ENCODE measurements at regions of chr17 and their contacts with region 1.

Region 1: DNA sequence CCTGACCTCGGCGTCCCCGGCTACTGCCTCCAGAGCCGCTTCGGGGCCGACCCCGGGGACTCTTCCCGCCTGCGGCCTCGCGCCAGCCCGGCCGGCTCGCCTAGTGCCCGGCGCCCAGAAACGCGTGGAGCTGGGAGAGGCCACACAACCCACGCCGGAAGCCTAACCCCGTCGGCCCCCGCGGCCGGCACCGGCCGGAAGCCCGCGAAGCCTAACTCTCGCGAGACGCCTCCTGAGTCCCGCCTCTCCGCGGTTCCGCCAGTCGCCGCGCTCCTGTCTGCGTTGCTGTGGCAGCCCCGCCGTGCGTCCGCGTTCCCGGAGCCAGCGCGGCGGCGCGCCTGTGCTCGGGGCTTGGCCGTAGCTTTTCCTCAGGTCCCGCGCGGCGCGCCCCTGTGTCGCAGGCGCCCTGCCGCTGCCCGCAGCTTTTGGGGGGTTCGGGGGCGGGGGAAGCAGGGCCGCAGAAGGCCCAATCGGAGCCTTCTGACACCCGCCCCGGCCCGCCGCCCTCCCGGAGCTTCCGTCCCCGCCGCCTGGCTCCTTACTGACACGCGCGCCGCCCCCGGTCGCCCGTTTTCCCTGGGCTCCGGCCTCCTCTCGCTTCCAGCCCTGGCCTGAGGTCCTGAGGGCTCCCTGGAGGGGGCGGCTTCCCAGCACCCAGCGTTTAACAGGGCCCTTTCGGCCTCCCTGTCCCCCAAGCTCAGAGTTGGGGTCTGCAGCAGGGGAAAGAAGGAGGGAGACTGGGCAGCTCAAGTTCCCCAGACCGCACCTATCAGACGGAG is 21.7 kb downstream of the NPTX1 start:
- DNase-seq: peak; percentile 91 to 97 (median 95)
- ATAC-seq: peak; percentile 95
- H3K4me3 ChIP-seq: peak overlapping the region; percentile 83
- H3K4me3 Mint-ChIP-seq: peak overlapping the region; percentile 86 to 98 (median 92)
- H3K27ac ChIP-seq: peak overlapping the region; percentile 100
- H3K27ac Mint-ChIP-seq: peak overlapping the region; percentile 94 to 99 (median 95)
- H3K4me1 ChIP-seq: peaks cover 11 to 14% of the 10 kb centered on the region in 2 donors
- H3K4me1 Mint-ChIP-seq: peaks cover 0 to 35% (median 15%) of the 10 kb centered on the region in 7 donors
- H3K27me3 ChIP-seq: peaks cover 0 to 3% of the 10 kb centered on the region in 2 donors
- H3K27me3 Mint-ChIP-seq: peaks cover 0 to 22% (median 20%) of the 10 kb centered on the region in 5 donors

Region 2: GRCh38 chr17:80384088-80384960 is 70.4 kb before region 1 on chr17:
- CTCF ChIA-PET with region 1: no interaction called
- POLR2A ChIA-PET with region 1: no interaction called
- intact Hi-C with region 1: no loop called
- DNase-seq: no peak
- ATAC-seq: no peak
- H3K4me3 ChIP-seq: no peak overlapping the region
- H3K4me3 Mint-ChIP-seq: peak overlapping the region in 2 of 10 donors; percentile 48 to 63
- H3K27ac ChIP-seq: no peak overlapping the region
- H3K27ac Mint-ChIP-seq: peak overlapping the region in 8 of 9 donors; percentile 14 to 81 (median 61)
- H3K4me1 ChIP-seq: no peaks in the 10 kb centered on the region
- H3K4me1 Mint-ChIP-seq: peaks cover 0 to 16% (median 0%) of the 10 kb centered on the region in 7 donors
- H3K27me3 ChIP-seq: no peaks in the 10 kb centered on the region
- H3K27me3 Mint-ChIP-seq: no peaks in the 10 kb centered on the region

Region 3: GRCh38 chr17:80414803-80415625 is 39.7 kb before region 1 on chr17 and contains the start of gene ENDOV:
- CTCF ChIA-PET with region 1: no interaction called
- POLR2A ChIA-PET with region 1: interaction called, 8 read pairs
- intact Hi-C with region 1: loop called (anchors 1 kb)
- DNase-seq: peak; percentile 87 to 97 (median 92)
- ATAC-seq: peak; percentile 94
- H3K4me3 ChIP-seq: peak within 1 kb of the TSS; percentile 74
- H3K4me3 Mint-ChIP-seq: peak within 1 kb of the TSS; percentile 78 to 92 (median 88)
- H3K27ac ChIP-seq: peak within 1 kb of the TSS; percentile 83
- H3K27ac Mint-ChIP-seq: peak within 1 kb of the TSS; percentile 47 to 94 (median 77)
- H3K4me1 ChIP-seq: peaks cover 4 to 16% of the 10 kb centered on the region in 2 donors
- H3K4me1 Mint-ChIP-seq: peaks cover 12 to 40% (median 32%) of the 10 kb centered on the region in 7 donors
- H3K27me3 ChIP-seq: peaks cover 0 to 4% of the 10 kb centered on the region in 2 donors
- H3K27me3 Mint-ChIP-seq: peaks cover 5 to 32% (median 15%) of the 10 kb centered on the region in 5 donors
- total RNA-seq, gene ENDOV: 20.3 to 26.5 (median 21.7) TPM

Region 4: GRCh38 chr17:80477647-80478478 is 23.1 kb after region 1 on chr17:
- CTCF ChIA-PET with region 1: no interaction called
- POLR2A ChIA-PET with region 1: interaction called, 5 read pairs
- intact Hi-C with region 1: loop called in 1 of 2 experiments (anchors 2 kb)
- DNase-seq: peak in 6 of 9 donors; percentile 29 to 58 (median 42)
- ATAC-seq: peak; percentile 31
- H3K4me3 ChIP-seq: no peak overlapping the region
- H3K4me3 Mint-ChIP-seq: peak overlapping the region in 1 of 10 donors; percentile 76
- H3K27ac ChIP-seq: no peak overlapping the region
- H3K27ac Mint-ChIP-seq: no peak overlapping the region
- H3K4me1 ChIP-seq: peaks cover 8 to 15% of the 10 kb centered on the region in 2 donors
- H3K4me1 Mint-ChIP-seq: peaks cover 8 to 24% (median 21%) of the 10 kb centered on the region in 7 donors
- H3K27me3 ChIP-seq: peaks cover 0 to 20% of the 10 kb centered on the region in 2 donors
- H3K27me3 Mint-ChIP-seq: peaks cover 46 to 58% (median 53%) of the 10 kb centered on the region in 5 donors

Region 5: GRCh38 chr17:80544655-80545498 is 90.1 kb after region 1 on chr17 and contains the start of gene RPTOR:
- CTCF ChIA-PET with region 1: no interaction called
- POLR2A ChIA-PET with region 1: interaction called, 11 read pairs
- intact Hi-C with region 1: loop called in 1 of 2 experiments (anchors 2 kb)
- DNase-seq: peak; percentile 71 to 91 (median 86)
- ATAC-seq: peak; percentile 100
- H3K4me3 ChIP-seq: peak within 1 kb of the TSS; percentile 97
- H3K4me3 Mint-ChIP-seq: peak within 1 kb of the TSS; percentile 88 to 97 (median 94)
- H3K27ac ChIP-seq: peak within 1 kb of the TSS; percentile 79
- H3K27ac Mint-ChIP-seq: peak within 1 kb of the TSS; percentile 85 to 97 (median 93)
- H3K4me1 ChIP-seq: peaks cover 13 to 15% of the 10 kb centered on the region in 2 donors
- H3K4me1 Mint-ChIP-seq: peaks cover 17 to 39% (median 32%) of the 10 kb centered on the region in 7 donors
- H3K27me3 ChIP-seq: no peaks in the 10 kb centered on the region
- H3K27me3 Mint-ChIP-seq: peaks cover 0 to 4% (median 3%) of the 10 kb centered on the region in 5 donors
- total RNA-seq, gene RPTOR: 53.7 to 89.8 (median 69.5) TPM

Region 6: GRCh38 chr17:80704381-80704819 is 249.7 kb after region 1 on chr17:
- CTCF ChIA-PET with region 1: no interaction called
- POLR2A ChIA-PET with region 1: interaction called, 6 read pairs
- intact Hi-C with region 1: loop called in 1 of 2 experiments (anchors 10 kb)
- DNase-seq: no peak
- ATAC-seq: no peak
- H3K4me3 ChIP-seq: no peak overlapping the region
- H3K4me3 Mint-ChIP-seq: peak overlapping the region in 7 of 10 donors; percentile 42 to 76 (median 51)
- H3K27ac ChIP-seq: no peak overlapping the region
- H3K27ac Mint-ChIP-seq: peak overlapping the region in 7 of 9 donors; percentile 34 to 96 (median 88)
- H3K4me1 ChIP-seq: peaks cover 33 to 35% of the 10 kb centered on the region in 2 donors
- H3K4me1 Mint-ChIP-seq: peaks cover 46 to 91% (median 83%) of the 10 kb centered on the region in 7 donors
- H3K27me3 ChIP-seq: no peaks in the 10 kb centered on the region
- H3K27me3 Mint-ChIP-seq: no peaks in the 10 kb centered on the region

Region 7: DNA sequence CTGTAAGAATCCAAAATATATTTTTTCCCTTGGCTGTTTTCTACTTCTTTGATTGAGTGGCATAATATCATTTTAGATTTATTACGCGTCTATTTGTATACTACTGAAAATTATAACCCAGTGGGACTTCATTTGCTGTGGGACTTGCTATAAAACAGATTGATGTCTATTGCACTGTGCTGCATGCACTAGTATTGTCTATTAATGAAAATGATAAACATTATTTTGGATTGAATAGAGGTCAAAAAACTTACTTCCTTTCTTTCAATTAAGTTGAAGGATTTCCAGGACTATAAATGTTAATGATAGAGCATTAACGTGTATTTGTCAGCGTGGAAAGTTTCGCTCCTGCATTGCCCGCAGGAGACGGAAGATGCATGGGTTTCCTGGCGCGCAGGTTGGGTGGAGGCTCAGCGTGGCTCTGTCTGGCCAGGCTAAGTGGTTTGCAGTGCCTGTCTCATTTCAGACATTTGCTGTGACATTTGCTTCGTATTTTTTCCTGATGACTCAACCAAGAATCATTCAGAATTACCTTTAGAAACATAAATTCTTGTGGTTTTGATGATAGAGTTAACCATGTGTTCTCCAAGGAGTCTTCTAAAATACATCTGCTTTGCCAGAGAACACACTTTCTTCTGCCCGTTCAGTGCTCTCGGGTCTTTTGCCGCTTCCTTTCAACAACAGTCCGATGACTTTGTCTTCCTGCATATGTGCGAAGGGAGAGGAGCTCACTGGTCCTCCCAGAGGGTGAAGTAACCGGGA is 306.5 kb after region 1 on chr17:
- CTCF ChIA-PET with region 1: no interaction called
- POLR2A ChIA-PET with region 1: interaction called, 4 read pairs
- intact Hi-C with region 1: loop called in 1 of 2 experiments (anchors 10 kb)
- DNase-seq: peak in 5 of 9 donors; percentile 34 to 73 (median 41)
- ATAC-seq: peak; percentile 45
- H3K4me3 ChIP-seq: peak overlapping the region; percentile 28
- H3K4me3 Mint-ChIP-seq: peak overlapping the region; percentile 60 to 84 (median 80)
- H3K27ac ChIP-seq: peak overlapping the region; percentile 81
- H3K27ac Mint-ChIP-seq: peak overlapping the region; percentile 87 to 98 (median 94)
- H3K4me1 ChIP-seq: peaks cover 34 to 68% of the 10 kb centered on the region in 2 donors
- H3K4me1 Mint-ChIP-seq: peaks cover 59 to 94% (median 84%) of the 10 kb centered on the region in 7 donors
- H3K27me3 ChIP-seq: no peaks in the 10 kb centered on the region
- H3K27me3 Mint-ChIP-seq: no peaks in the 10 kb centered on the region

Region 8: GRCh38 chr17:80997424-80997841 is 542.7 kb after region 1 on chr17:
- CTCF ChIA-PET with region 1: no interaction called
- POLR2A ChIA-PET with region 1: no interaction called
- intact Hi-C with region 1: no loop called
- DNase-seq: no peak
- ATAC-seq: peak; percentile 26
- H3K4me3 ChIP-seq: no peak overlapping the region
- H3K4me3 Mint-ChIP-seq: no peak overlapping the region
- H3K27ac ChIP-seq: no peak overlapping the region
- H3K27ac Mint-ChIP-seq: no peak overlapping the region
- H3K4me1 ChIP-seq: peaks cover 0 to 7% of the 10 kb centered on the region in 2 donors
- H3K4me1 Mint-ChIP-seq: peaks cover 7 to 22% (median 13%) of the 10 kb centered on the region in 7 donors
- H3K27me3 ChIP-seq: no peaks in the 10 kb centered on the region
- H3K27me3 Mint-ChIP-seq: peaks cover 0 to 10% (median 0%) of the 10 kb centered on the region in 5 donors

Region 9: DNA sequence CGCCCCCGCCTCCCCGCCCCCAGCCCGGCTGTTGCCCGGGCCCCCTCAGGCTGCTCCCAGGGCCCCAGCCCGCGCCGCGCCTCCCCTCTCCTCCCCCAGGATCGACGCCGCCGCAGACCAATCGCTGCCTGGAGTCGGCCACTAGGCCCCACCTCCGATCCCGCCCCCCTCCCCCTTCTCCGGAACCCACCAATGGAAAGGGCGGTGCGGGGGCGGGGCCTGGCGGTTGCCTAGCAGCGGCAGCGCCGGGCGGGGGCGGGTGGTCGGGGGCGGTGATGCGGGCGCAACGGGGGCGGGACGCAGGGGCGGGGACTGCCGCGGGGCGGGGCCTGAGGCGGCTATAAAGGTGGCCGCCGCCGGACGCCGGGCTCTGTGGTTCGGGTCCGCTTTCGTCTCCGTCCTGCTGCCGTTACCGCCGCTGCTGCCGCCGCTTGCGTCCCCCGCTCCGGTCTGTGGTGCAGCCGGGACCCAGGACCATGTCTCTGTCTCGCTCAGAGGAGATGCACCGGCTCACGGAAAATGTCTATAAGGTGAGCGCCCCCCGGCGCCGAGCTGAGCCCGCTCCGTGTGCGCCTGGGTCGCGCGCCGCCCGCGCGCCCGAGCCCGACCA is 580.1 kb after region 1 on chr17 and contains the start of gene BAIAP2:
- CTCF ChIA-PET with region 1: no interaction called
- POLR2A ChIA-PET with region 1: interaction called, 4 read pairs
- intact Hi-C with region 1: loop called in 1 of 2 experiments (anchors 10 kb)
- DNase-seq: peak; percentile 88 to 95 (median 94)
- ATAC-seq: peak; percentile 94
- H3K4me3 ChIP-seq: peak within 1 kb of the TSS; percentile 53
- H3K4me3 Mint-ChIP-seq: peak within 1 kb of the TSS; percentile 87 to 96 (median 92)
- H3K27ac ChIP-seq: peak within 1 kb of the TSS; percentile 67
- H3K27ac Mint-ChIP-seq: peak within 1 kb of the TSS in 8 of 9 donors; percentile 49 to 93 (median 87)
- H3K4me1 ChIP-seq: peaks cover 0 to 9% of the 10 kb centered on the region in 2 donors
- H3K4me1 Mint-ChIP-seq: peaks cover 5 to 27% (median 19%) of the 10 kb centered on the region in 7 donors
- H3K27me3 ChIP-seq: no peaks in the 10 kb centered on the region
- H3K27me3 Mint-ChIP-seq: peaks cover 0 to 50% (median 0%) of the 10 kb centered on the region in 5 donors
- total RNA-seq, gene BAIAP2: 7.3 to 13.7 (median 12.3) TPM